ENCODE measurements at regions of chr13 and their contacts with region 1.

Region 1: DNA sequence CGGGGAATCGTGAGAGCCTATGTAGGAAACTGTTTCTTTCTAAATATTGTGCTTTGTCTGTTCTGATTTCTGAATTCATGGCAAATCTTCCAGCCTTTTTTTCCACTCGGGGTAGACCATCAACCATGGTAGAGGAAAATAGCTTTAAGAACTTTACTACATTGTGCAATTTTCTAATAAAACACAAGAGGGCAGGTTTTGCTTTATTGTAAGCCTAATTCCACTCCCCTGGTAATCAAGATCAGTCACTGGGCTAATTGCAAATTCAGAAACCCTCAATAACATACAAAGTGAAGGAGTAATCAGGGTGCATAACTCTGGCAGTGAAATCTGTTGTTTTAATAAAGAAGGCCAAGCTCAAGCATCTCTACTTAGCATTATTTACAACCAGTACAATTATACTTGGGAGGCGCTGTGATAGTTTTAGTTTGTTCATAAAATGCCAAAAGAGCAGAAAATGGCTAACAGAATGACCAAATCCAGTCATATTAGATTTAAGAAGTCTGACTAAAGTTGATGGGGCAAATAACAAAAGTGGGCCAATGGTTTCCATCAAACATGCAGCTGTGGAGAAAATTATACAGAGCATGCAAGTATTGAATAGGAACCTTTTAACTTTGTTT is 43.8 kb downstream of the DCT start:
- DNase-seq: no peak
- ATAC-seq: peak; percentile 67 to 72
- H3K4me3 ChIP-seq: no peak overlapping the region
- H3K27ac ChIP-seq: no peak overlapping the region
- H3K4me1 ChIP-seq: no peaks in the 10 kb centered on the region
- H3K27me3 ChIP-seq: no peaks in the 10 kb centered on the region
- CTCF ChIP-seq: peak; percentile 65

Region 2: DNA sequence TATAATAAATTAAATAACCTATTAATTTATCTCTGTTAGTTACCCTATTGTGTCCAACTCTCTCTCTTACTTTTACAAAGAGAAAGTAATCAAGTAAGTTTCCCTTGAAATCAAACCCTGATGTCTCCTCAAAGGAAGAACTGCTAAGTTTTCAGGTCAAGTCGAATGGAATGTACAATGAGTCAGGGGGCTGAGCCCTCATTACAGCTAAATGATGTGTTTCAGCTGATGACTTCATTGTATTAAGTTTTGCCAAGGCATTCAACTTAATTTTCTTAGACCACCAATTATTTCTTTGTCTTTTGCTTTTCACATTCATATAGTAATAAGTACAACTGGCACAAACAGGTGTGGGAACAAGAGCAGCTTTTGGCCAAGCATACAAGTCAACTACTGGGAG is 98.5 kb after region 1 on chr13:
- intact Hi-C with region 1: no loop called
- DNase-seq: no peak
- ATAC-seq: no peak
- H3K4me3 ChIP-seq: no peak overlapping the region
- H3K27ac ChIP-seq: no peak overlapping the region
- H3K4me1 ChIP-seq: no peaks in the 10 kb centered on the region
- H3K27me3 ChIP-seq: no peaks in the 10 kb centered on the region
- CTCF ChIP-seq: no peak

Region 3: DNA sequence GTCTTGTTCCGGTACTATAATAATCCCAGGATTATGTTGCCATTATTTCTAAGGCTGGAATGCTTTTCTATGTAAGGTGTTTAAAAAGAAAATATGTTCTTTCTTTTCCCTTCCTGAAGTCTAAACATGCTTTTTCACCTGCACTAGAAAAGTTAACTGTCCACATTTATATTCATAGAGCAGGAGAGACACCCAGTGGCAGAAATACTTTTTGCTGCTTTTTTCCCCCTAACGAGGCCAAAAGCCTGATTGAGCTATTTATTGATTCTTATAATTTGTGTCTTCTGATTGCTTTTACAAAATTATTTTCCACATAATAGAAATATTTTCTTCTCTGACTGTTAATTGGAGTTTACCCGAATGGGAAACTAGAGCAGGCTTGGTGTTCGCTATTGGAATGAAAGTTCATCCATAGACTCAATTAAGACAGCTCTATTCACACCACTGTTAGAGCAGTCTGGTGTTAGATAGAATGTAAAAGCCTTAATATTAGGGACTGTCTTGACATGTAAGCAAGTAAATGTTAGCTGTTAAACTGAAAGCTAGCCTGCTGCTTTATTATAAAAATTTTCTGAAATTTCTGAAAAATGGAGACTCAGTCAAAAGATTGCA is 181.8 kb after region 1 on chr13:
- intact Hi-C with region 1: loop called (anchors 5 kb)
- DNase-seq: no peak
- ATAC-seq: peak in 1 of 2 donors; percentile 54
- H3K4me3 ChIP-seq: no peak overlapping the region
- H3K27ac ChIP-seq: no peak overlapping the region
- H3K4me1 ChIP-seq: no peaks in the 10 kb centered on the region
- H3K27me3 ChIP-seq: no peaks in the 10 kb centered on the region
- CTCF ChIP-seq: peak; percentile 71